Endothelial cell of umbilical vein (primary cell): ENCODE measurements at regions of chr2 and their contacts with region 1.

Region 1: DNA sequence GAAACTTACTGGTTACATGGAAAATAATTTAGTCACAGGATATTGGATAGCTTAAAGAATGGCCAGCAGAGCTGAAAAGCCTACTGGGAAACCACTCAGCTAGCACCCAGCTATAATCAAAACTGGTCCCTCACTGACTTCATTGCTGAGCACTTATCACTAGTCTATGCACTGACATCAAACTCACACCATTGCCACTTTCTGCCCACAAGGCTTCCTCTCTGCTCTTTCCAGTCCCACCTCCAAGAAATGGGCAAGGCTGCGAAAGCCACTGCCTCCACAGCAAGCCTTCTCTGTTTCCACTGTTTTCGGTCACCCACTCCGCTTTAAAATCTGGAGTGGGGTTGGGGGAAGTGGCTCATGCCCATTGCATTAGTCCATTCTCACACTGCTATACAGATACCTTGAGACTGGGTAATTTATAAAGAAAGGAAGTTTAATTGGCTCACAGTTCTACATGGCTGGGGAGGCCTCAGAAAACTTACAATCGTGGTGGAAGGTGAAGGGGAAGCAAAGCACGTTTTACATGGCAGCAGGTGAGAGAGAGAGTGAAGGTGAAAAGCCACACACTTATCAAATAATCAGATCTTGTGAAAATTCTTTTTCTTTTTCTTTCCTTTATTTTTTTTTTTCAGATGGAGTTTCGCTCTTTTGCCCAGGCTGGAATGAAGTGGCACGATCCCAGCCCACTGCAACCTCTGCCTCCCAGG is 77.0 kb upstream of the CERS6 start:
- DNase-seq: no peak
- H3K4me3 ChIP-seq: no peak overlapping the region
- H3K27ac ChIP-seq: no peak overlapping the region
- H3K4me1 ChIP-seq: no peaks in the 10 kb centered on the region
- H3K27me3 ChIP-seq: no peaks in the 10 kb centered on the region
- CTCF ChIP-seq: no peak
- POLR2A ChIP-seq: no peak

Region 2: GRCh38 chr2:168416555-168416954 is 37.4 kb after region 1 on chr2:
- CTCF ChIA-PET with region 1: no interaction called
- POLR2A ChIA-PET with region 1: no interaction called
- dilution Hi-C with region 1: no loop called
- intact Hi-C with region 1: loop called (anchors 2 kb)
- DNase-seq: no peak
- H3K4me3 ChIP-seq: no peak overlapping the region
- H3K27ac ChIP-seq: no peak overlapping the region
- H3K4me1 ChIP-seq: no peaks in the 10 kb centered on the region
- H3K27me3 ChIP-seq: peaks cover 0 to 3% of the 10 kb centered on the region in 2 experiments
- CTCF ChIP-seq: no peak
- POLR2A ChIP-seq: no peak